HEK293 (cell line): ENCODE measurements at regions of chr10 and their contacts with region 1.

Region 1: GRCh38 chr10:58531084-58531695 is 18.5 kb downstream of the BICC1 start:
- H3K4me3 ChIP-seq: no peak overlapping the region
- H3K27ac ChIP-seq: no peak overlapping the region
- H3K4me1 ChIP-seq: no peaks in the 10 kb centered on the region
- CTCF ChIP-seq: no peak

Region 2: GRCh38 chr10:58435297-58435985 is 95.7 kb before region 1 on chr10:
- CTCF ChIA-PET with region 1: interaction called, 10 read pairs
- POLR2A ChIA-PET with region 1: no interaction called
- H3K4me3 ChIP-seq: no peak overlapping the region
- H3K27ac ChIP-seq: no peak overlapping the region
- H3K4me1 ChIP-seq: peaks cover 12% of the 10 kb centered on the region
- CTCF ChIP-seq: no peak

Region 3: DNA sequence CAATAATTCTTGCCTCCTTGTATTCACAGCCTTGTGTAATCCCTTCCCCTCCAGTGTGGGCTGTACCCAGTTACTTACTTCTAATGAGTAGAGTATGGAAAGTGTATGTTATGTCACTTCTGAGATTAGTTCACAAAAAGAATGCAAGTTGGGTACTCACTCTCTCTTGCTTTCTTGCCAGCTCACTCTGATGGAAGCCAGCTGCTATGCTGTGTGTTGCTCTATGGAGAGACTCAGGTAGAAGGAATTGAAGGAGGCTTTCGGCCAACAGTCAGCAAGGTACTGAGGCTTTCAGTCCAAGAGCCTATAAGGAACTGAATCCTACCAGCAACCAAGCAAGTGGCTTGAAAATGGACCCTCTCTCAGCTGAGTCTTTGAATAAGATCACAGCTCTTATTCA is 28.2 kb before region 1 on chr10:
- CTCF ChIA-PET with region 1: no interaction called
- POLR2A ChIA-PET with region 1: no interaction called
- H3K4me3 ChIP-seq: no peak overlapping the region
- H3K27ac ChIP-seq: no peak overlapping the region
- H3K4me1 ChIP-seq: no peaks in the 10 kb centered on the region
- CTCF ChIP-seq: no peak

Region 4: DNA sequence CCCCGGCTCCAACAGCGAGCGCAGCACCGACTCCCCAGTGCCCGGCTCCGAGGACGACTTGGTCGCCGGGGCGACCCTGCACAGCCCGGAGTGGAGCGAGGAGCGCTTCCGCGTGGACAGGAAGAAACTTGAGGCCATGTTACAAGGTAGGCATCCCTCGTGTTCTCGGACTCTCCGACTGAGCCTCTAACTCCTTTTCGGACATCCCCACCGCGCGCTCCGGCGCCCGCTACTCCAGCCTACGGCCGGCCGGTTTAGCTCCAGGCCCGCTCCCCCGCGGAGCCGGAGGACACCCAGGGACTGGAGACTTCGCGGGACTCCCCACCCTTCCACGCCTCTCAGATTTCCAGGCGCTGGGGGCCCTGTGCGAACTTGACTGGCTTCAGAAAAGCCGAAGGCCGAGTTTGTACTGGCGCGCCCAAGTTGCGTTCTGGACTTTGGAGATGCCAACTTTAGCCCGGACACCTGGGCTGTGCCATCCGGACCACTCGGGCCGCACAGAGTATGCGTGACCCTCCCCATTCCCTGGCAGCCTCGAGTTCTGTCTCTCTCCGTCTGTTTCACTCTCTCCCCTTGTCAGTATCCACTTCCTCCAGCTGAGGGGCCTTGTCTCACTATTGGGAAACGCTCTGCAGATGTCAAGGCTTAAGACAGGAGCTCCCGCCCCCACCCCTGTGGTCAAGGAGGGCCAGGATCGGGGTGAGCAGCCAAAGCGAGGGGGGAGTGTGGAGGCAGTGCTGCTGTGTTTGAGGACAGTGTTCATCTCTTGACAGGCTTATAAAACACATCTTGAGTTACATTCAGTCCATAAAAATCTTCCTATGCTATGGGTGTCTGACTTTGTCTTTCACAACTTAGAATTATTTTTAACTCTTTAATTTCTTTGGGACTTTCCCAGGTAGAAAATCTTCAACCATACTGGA is 17.7 kb before region 1 on chr10:
- CTCF ChIA-PET with region 1: interaction called, 13 read pairs
- POLR2A ChIA-PET with region 1: interaction called, 3 read pairs
- H3K4me3 ChIP-seq: peak overlapping the region; percentile 90
- H3K27ac ChIP-seq: peak overlapping the region; percentile 75; the same call in 1 of the 2 replicates
- H3K4me1 ChIP-seq: 0 out of 2 replicates have a peak, but pooled peaks cover 3% of the 10 kb centered on the region
- CTCF ChIP-seq: no peak

Region 5: GRCh38 chr10:58641095-58641531 is 109.9 kb after region 1 on chr10:
- CTCF ChIA-PET with region 1: interaction called, 24 read pairs
- POLR2A ChIA-PET with region 1: no interaction called
- H3K4me3 ChIP-seq: no peak overlapping the region
- H3K27ac ChIP-seq: no peak overlapping the region
- H3K4me1 ChIP-seq: peaks cover 5% of the 10 kb centered on the region; the same call in 1 of the 2 replicates
- CTCF ChIP-seq: peak; percentile 20; the same call in 1 of the 2 replicates